A549 (cell line): ENCODE measurements at regions of chr6 and their contacts with region 1.

Region 1: DNA sequence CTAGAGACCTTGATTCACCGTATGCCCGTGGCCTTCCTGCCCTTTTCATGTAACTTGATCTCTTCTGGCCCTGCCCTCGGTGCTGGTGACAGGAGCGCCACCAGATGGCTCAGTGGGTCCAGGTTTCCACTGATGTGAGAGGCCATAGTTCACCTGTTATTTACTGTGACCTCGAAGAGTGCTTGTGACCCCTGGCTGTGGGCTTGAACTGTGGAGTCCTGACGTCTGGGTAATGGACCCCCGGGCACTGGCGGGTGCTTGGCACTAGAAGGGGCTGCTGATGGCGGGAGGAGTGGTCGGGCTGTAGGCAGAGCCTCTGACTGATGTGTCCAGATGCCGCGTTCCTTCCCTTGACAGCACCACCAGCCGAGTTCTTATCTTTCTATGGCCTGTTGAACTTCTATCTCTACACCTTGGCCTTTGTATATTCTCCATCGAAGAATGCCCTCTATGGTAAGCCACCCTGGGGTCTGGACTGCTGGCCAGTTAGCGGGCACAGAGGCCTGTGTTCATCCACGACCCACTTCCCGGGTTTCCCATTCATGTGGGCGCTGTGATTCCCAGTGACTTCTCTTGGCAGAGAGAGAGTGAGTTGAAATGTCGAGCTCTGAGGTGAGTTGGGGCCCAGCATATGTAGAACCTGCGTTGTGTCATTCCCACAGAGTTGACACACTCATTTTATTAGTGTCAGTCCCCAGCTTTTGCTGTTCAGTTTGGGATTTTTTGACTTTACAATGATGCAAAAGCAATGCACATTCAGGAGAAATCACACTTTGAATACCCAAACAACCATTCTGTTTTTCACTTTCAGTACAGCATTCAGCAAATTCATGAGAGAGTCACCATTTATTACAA is 14.9 kb downstream of the DYNLT1 start:
- DNase-seq: no peak
- ATAC-seq: no peak
- H3K4me3 ChIP-seq: no peak overlapping the region
- H3K27ac ChIP-seq: no peak overlapping the region
- H3K4me1 ChIP-seq: peaks cover 22% of the 10 kb centered on the region
- CTCF ChIP-seq: no peak
- EP300 ChIP-seq: no peak
- POLR2A ChIP-seq: no peak
- RAD21 ChIP-seq: no peak

Region 2: DNA sequence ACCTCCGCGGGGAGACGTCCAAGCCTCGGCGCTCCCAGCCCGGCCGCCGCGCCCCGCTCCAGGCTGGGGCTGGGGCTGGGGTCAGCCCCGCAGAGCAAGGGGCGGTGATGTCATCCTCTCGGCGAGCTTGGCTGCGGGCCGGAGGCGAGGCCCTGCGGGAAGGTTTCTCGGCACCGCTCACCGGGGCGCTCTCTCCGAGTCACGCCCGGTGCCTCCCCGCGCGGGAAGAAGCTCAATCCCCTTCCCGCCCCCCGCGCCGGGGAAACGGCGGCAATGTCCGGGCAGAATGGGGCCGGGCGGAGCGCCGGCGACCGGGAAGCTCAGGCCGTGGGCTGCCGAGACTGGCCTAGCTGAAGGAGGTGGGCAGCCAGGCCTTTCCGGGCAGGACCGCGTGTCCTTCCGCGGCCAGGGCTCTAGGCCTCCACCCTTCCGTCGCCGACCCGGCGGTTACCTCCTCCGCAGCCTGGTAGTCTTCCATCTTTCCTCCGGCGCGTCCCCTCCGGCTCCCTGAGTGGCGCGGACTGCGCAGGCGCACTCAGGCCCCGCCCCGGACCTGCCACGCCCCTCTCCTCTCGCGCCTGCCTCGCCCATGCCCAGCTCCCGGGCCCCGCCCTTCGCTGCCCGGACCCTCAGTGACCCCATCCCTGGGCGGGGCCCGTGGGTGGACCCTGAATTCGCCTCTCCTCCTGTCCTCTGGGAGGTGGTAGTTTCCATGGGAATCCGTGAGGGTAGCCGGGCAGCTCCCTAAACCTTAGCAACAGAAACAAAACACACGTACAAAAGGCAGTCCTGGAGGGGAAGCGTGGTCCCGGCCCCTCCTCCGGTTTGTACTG is 14.9 kb after region 1 on chr6 and contains the start of gene DYNLT1:
- CTCF ChIA-PET with region 1: interaction called, 5 read pairs
- POLR2A ChIA-PET with region 1: interaction called, 16 read pairs
- DNase-seq: peak; percentile 77 to 88
- ATAC-seq: peak; percentile 94 to 96
- H3K4me3 ChIP-seq: peak within 1 kb of the TSS; percentile 84
- H3K27ac ChIP-seq: peak within 1 kb of the TSS; percentile 89 to 99
- H3K4me1 ChIP-seq: peaks cover 19% of the 10 kb centered on the region
- CTCF ChIP-seq: no peak
- EP300 ChIP-seq: no peak
- POLR2A ChIP-seq: peak; percentile 89
- RAD21 ChIP-seq: no peak
- polyA plus RNA-seq, gene DYNLT1: 174 and 232 TPM in 2 replicates